ENCODE measurements at regions of chr10 and their contacts with region 1.

Region 1: DNA sequence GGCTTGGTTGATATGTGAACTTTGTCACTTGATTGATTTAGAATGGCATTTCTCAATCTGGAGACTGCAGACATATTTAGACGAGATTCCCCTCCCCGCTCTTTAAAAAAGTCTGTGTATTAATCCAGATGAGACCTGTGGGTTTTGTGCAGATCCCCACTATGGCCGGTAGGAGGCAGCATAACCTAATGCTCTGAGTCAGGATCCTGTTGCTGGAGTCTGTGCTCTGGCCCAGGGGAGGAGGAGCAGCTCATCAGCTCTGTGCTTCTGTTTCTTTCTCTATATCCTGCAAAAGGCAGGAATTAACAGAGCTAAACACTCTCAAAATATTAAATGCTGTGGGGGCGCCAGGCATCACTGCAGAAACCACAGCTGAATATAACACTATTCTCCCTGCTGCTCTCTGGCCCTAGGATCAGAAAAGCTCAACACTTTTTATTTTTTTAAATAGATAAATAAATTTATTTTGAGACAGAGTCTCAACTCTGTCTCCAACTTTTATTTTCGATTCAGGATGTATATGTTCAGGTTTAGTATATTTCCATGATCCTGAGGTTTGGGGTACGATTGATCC is 23.9 kb upstream of the SEPHS1 start:
- DNase-seq: peak; percentile 87 to 88
- ATAC-seq: peak; percentile 97 to 100
- H3K4me3 ChIP-seq: no peak overlapping the region
- H3K27ac ChIP-seq: no peak overlapping the region
- H3K4me1 ChIP-seq: no peaks in the 10 kb centered on the region
- CTCF ChIP-seq: peak; percentile 95
- EP300 ChIP-seq: no peak
- POLR2A ChIP-seq: no peak
- RAD21 ChIP-seq: peak; percentile 93 to 97

Region 2: GRCh38 chr10:13284050-13284449 is 87.9 kb before region 1 on chr10:
- CTCF ChIA-PET with region 1: no interaction called
- POLR2A ChIA-PET with region 1: no interaction called
- DNase-seq: no peak
- ATAC-seq: no peak
- H3K4me3 ChIP-seq: no peak overlapping the region
- H3K27ac ChIP-seq: no peak overlapping the region
- H3K4me1 ChIP-seq: no peaks in the 10 kb centered on the region
- CTCF ChIP-seq: no peak
- EP300 ChIP-seq: no peak
- POLR2A ChIP-seq: no peak
- RAD21 ChIP-seq: no peak

Region 3: GRCh38 chr10:13296476-13296875 is 75.5 kb before region 1 on chr10:
- CTCF ChIA-PET with region 1: no interaction called
- POLR2A ChIA-PET with region 1: no interaction called
- DNase-seq: no peak
- ATAC-seq: no peak
- H3K4me3 ChIP-seq: no peak overlapping the region
- H3K27ac ChIP-seq: no peak overlapping the region
- H3K4me1 ChIP-seq: peaks cover 5% of the 10 kb centered on the region
- CTCF ChIP-seq: no peak
- EP300 ChIP-seq: no peak
- POLR2A ChIP-seq: no peak
- RAD21 ChIP-seq: no peak

Region 4: GRCh38 chr10:13349463-13350274 is 22.3 kb before region 1 on chr10:
- CTCF ChIA-PET with region 1: interaction called, 18 read pairs
- POLR2A ChIA-PET with region 1: no interaction called
- DNase-seq: no peak
- ATAC-seq: no peak
- H3K4me3 ChIP-seq: peak overlapping the region; percentile 89
- H3K27ac ChIP-seq: peak overlapping the region; percentile 98 to 100
- H3K4me1 ChIP-seq: peaks cover 12% of the 10 kb centered on the region
- CTCF ChIP-seq: no peak
- EP300 ChIP-seq: no peak
- POLR2A ChIP-seq: no peak
- RAD21 ChIP-seq: no peak

Region 5: DNA sequence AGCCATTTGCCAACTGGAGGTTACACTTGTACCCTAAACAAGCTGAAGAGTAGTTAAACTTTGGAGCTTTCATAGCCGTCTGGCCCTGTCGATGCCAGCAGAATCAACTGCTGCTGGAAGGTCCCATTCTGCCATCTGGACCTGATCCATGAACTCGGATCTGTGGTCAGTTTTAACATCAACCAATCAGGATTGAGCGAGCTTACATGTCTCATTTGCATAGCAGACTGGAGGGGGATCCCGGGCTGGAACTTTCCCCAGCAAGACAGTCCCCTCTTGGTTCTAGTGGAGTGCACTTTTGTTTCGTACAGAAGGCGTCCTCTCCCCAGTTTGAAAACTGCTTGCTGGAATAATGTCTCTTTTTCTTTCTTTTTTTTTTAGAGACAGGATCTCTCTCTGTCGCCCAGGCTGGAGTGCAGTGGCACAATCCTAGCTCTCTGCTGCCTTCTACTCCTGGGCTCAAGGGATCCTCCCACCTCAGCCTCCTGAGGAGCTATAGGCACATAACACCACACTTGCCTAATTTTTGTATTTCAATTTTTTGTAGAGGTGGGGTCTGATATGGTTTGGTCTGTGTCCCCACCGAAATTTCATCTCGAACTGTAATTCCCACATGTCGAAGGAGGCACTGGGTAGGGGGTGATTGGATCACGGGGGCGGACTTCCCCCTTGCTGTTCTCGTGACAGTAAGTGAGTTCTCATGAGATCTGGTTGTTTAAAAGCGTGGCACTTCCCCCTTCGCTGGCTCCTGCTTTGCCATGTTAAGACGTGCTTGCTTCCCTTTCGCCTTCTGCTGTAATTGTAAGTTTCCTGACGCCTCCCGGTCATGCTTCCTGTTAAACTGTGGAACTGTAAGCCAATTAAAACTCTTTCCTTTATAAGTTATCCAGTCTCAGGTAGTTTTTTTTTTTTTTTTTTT is 18.9 kb after region 1 on chr10:
- CTCF ChIA-PET with region 1: interaction called, 28 read pairs
- POLR2A ChIA-PET with region 1: no interaction called
- DNase-seq: no peak
- ATAC-seq: no peak
- H3K4me3 ChIP-seq: no peak overlapping the region
- H3K27ac ChIP-seq: no peak overlapping the region
- H3K4me1 ChIP-seq: no peaks in the 10 kb centered on the region
- CTCF ChIP-seq: no peak
- EP300 ChIP-seq: no peak
- POLR2A ChIP-seq: no peak
- RAD21 ChIP-seq: no peak

Region 6: DNA sequence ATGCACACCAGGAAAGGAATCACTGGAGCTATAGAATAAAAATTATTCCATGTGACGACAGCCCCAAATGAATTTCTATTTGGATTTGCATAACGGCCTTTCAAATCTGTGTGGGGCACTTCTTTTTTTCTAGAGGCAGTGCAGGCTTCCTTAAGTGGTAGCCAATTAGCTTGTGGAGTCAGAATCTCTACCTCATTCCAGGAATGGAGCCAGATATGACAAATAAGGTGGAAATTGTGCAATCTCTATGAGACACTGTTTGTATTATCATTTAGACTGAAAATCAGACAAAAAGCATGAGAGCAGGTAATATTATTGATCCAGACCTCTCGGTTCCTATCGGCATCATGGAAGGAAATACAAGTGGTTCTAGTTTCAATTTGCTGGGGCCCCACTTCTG is 78.1 kb after region 1 on chr10:
- CTCF ChIA-PET with region 1: interaction called, 11 read pairs
- POLR2A ChIA-PET with region 1: no interaction called
- DNase-seq: no peak
- ATAC-seq: no peak
- H3K4me3 ChIP-seq: no peak overlapping the region
- H3K27ac ChIP-seq: no peak overlapping the region
- H3K4me1 ChIP-seq: peaks cover 14% of the 10 kb centered on the region
- CTCF ChIP-seq: no peak
- EP300 ChIP-seq: no peak
- POLR2A ChIP-seq: no peak
- RAD21 ChIP-seq: no peak

Region 7: DNA sequence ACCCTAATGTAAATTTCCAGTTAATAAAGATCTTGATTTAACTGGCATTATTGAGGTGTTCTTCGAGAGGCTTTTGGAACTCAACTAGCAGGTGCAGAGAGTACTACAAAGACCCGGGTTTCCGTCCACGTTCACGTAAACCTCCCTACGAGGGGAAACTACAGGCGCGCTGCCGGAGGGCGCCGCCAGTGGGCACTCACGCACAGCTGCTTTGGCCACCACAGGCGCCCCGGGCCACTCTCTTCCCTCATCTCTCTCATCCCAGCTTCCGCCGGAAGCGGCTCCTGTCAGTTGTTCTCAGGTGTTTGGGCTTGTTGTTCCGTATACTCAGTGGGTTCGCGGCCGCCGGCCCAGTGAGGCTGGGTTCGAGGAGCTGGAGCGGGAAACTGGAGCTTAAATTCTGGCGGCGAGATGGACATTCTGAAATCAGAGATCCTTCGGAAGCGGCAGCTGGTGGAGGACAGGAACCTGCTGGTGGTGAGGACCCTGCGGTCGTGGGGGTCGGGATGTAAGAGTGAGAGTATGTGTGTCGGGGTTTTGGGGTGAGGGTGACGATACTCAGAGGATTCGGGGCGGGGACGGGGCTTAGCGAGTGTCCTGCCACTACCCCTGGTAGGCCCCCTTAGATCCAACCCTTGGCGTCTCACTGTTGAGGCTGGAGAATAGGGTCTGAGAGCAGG is 214.8 kb after region 1 on chr10 and contains the start of gene PRPF18:
- CTCF ChIA-PET with region 1: interaction called, 21 read pairs
- POLR2A ChIA-PET with region 1: interaction called, 5 read pairs
- DNase-seq: peak; percentile 96 to 98
- ATAC-seq: peak; percentile 99
- H3K4me3 ChIP-seq: peak within 1 kb of the TSS; percentile 99
- H3K27ac ChIP-seq: peak within 1 kb of the TSS; percentile 75 to 88
- H3K4me1 ChIP-seq: peaks cover 6% of the 10 kb centered on the region; the same call in 1 of the 3 replicates
- CTCF ChIP-seq: peak; percentile 87
- EP300 ChIP-seq: no peak
- POLR2A ChIP-seq: peak; percentile 63
- RAD21 ChIP-seq: peak; percentile 32 to 56; a peak in 4 of 5 replicates
- polyA plus RNA-seq, gene PRPF18: 21.5 and 39.6 TPM in 2 replicates